IMR-90 (cell line): ENCODE measurements at regions of chr9 and their contacts with region 1.

Region 1: DNA sequence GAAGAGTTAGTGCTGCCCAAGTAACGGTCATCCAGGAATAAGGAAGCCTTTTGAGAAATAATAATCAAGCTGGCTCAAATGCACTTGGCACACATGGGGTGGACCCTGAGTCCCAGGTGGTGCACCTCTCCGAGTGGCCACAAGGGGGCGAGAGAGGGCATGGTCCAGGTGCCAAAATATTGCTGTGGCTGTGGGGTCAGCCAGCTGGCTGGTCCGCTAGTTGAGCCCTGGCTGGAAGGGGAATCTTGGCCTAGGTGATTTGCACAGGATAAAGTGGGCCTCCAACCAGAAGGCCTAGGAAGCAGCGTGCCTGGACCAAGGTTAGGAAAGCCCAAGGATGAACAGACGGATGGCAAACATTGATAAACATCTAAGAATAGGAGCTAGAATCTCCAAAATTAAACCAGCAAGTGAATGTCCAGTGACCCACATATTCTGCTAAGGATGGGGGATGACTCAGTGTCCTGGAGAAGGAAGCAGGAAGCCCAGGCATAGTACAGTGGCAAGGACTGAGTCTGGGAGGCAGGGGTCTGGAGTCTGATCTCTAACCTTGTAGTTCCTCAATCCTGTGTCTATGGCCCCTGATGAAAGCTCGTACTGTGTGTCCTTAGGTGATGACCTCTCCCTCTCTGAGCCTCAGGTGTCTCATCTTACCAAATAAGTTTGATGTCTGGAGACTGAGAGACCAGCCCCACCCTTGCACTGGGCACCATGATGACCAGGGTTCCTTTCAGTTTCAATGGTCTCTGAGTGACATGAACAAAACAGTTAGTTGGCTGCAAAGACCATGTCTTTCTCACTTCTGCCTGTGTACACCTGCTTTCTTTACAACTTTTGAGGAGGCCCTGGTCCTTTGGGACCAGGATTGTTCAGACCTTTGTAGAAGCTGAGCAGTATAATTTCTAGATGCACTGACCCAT is 19.2 kb upstream of the SHB start:
- DNase-seq: peak; percentile 37
- ATAC-seq: peak; percentile 84
- H3K4me3 ChIP-seq: no peak overlapping the region
- H3K27ac ChIP-seq: no peak overlapping the region
- H3K4me1 ChIP-seq: peaks cover 2% of the 10 kb centered on the region; the same call in 1 of the 2 replicates
- H3K27me3 ChIP-seq: no peaks in the 10 kb centered on the region
- CTCF ChIP-seq: peak; percentile 80
- POLR2A ChIP-seq: no peak
- RAD21 ChIP-seq: peak; percentile 77

Region 2: GRCh38 chr9:37920471-37921167 is 167.6 kb before region 1 on chr9:
- CTCF ChIA-PET with region 1: no interaction called
- POLR2A ChIA-PET with region 1: no interaction called
- dilution Hi-C with region 1: no loop called
- in situ Hi-C with region 1: no loop called
- intact Hi-C with region 1: no loop called
- DNase-seq: no peak
- ATAC-seq: no peak
- H3K4me3 ChIP-seq: no peak overlapping the region
- H3K27ac ChIP-seq: no peak overlapping the region
- H3K4me1 ChIP-seq: peaks cover 6% of the 10 kb centered on the region; the same call in 1 of the 2 replicates
- H3K27me3 ChIP-seq: no peaks in the 10 kb centered on the region
- CTCF ChIP-seq: no peak
- POLR2A ChIP-seq: no peak
- RAD21 ChIP-seq: no peak

Region 3: GRCh38 chr9:38141746-38142591 is 53.7 kb after region 1 on chr9:
- CTCF ChIA-PET with region 1: no interaction called
- POLR2A ChIA-PET with region 1: no interaction called
- dilution Hi-C with region 1: no loop called
- in situ Hi-C with region 1: no loop called
- intact Hi-C with region 1: loop called (anchors 5 kb)
- DNase-seq: peak; percentile 83
- ATAC-seq: peak; percentile 88
- H3K4me3 ChIP-seq: no peak overlapping the region
- H3K27ac ChIP-seq: peak overlapping the region; percentile 50
- H3K4me1 ChIP-seq: peaks cover 13% of the 10 kb centered on the region
- H3K27me3 ChIP-seq: peaks cover 20% of the 10 kb centered on the region
- CTCF ChIP-seq: no peak
- POLR2A ChIP-seq: no peak
- RAD21 ChIP-seq: no peak

Region 4: GRCh38 chr9:38160613-38161215 is 72.4 kb after region 1 on chr9:
- CTCF ChIA-PET with region 1: interaction called, 16 read pairs
- POLR2A ChIA-PET with region 1: no interaction called
- dilution Hi-C with region 1: no loop called
- in situ Hi-C with region 1: no loop called
- intact Hi-C with region 1: loop called (anchors 5 kb)
- DNase-seq: peak; percentile 51
- ATAC-seq: peak; percentile 73
- H3K4me3 ChIP-seq: no peak overlapping the region
- H3K27ac ChIP-seq: no peak overlapping the region
- H3K4me1 ChIP-seq: no peaks in the 10 kb centered on the region
- H3K27me3 ChIP-seq: peaks cover 20% of the 10 kb centered on the region
- CTCF ChIP-seq: peak; percentile 75
- POLR2A ChIP-seq: no peak
- RAD21 ChIP-seq: peak; percentile 67

Region 5: DNA sequence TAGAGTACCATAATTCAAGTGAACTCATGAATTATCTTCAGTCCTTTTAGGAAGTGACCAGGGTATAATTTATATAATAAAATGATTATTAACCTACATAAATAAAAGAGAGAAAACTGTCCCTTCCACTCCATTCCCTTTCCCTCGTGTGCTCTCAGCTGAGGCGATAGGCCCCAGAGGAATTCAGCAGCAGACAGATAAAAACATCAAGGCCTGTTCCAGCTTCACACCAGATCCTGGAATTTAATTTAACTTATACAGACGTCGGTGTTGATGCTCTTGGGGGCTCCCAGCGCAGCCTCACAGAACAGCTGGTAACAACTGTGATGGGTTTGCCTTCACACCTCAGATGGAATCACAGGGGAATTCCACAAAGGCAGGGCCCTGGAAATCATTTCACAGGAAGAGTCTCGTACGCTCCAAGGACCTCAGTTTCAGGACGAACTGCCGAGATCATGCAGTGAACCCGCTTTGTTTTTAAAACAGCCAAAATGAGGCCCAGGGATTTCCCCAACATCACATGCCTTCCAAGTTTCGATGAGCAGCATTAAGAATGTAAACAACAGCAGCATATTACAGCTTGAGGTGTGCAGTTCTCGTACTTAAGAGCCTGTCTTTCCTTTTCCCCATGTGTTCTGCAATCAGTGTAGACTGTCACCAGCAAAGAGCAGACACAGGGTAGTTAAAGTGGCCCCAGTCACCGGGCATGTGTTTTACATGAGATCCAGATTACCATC is 230.7 kb after region 1 on chr9:
- CTCF ChIA-PET with region 1: no interaction called
- POLR2A ChIA-PET with region 1: no interaction called
- dilution Hi-C with region 1: no loop called
- in situ Hi-C with region 1: no loop called
- intact Hi-C with region 1: no loop called
- DNase-seq: peak; percentile 72
- ATAC-seq: peak; percentile 75
- H3K4me3 ChIP-seq: peak overlapping the region; percentile 26; the same call in 1 of the 2 replicates
- H3K27ac ChIP-seq: no peak overlapping the region
- H3K4me1 ChIP-seq: no peaks in the 10 kb centered on the region
- H3K27me3 ChIP-seq: peaks cover 26% of the 10 kb centered on the region
- CTCF ChIP-seq: no peak
- POLR2A ChIP-seq: no peak
- RAD21 ChIP-seq: no peak

Region 6: GRCh38 chr9:38408719-38409118 is 320.5 kb after region 1 on chr9:
- CTCF ChIA-PET with region 1: no interaction called
- POLR2A ChIA-PET with region 1: no interaction called
- dilution Hi-C with region 1: no loop called
- in situ Hi-C with region 1: no loop called
- intact Hi-C with region 1: loop called (anchors 5 kb)
- DNase-seq: no peak
- ATAC-seq: no peak
- H3K4me3 ChIP-seq: no peak overlapping the region
- H3K27ac ChIP-seq: no peak overlapping the region
- H3K4me1 ChIP-seq: no peaks in the 10 kb centered on the region
- H3K27me3 ChIP-seq: peaks cover 84% of the 10 kb centered on the region
- CTCF ChIP-seq: no peak
- POLR2A ChIP-seq: no peak
- RAD21 ChIP-seq: no peak

Region 7: DNA sequence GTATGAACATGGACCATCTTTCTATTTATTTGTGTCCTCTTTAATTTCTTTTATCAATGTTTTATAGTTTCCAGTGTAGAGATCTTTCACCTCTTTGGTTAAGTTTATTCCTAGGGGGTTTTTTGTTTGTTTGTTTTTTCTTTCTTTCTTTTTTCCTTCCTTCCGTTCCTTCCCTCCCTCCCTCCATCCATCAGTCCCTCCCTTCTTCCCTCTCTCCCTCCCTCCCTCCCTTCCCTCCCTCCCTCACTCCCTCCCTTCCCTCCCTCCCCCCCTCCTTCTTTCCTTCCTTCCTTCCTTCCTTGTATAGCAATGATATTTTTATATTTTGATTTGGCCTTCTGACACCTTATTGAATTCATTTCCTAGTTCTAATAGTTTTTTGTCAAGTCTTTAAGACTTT is 359.4 kb after region 1 on chr9:
- CTCF ChIA-PET with region 1: no interaction called
- POLR2A ChIA-PET with region 1: no interaction called
- dilution Hi-C with region 1: no loop called
- in situ Hi-C with region 1: no loop called
- intact Hi-C with region 1: no loop called
- DNase-seq: no peak
- ATAC-seq: no peak
- H3K4me3 ChIP-seq: no peak overlapping the region
- H3K27ac ChIP-seq: no peak overlapping the region
- H3K4me1 ChIP-seq: peaks cover 2% of the 10 kb centered on the region; the same call in 1 of the 2 replicates
- H3K27me3 ChIP-seq: no peaks in the 10 kb centered on the region
- CTCF ChIP-seq: no peak
- POLR2A ChIP-seq: no peak
- RAD21 ChIP-seq: no peak